GM10248 (cell line): ENCODE measurements at regions of chr10 and their contacts with region 1.

Region 1: DNA sequence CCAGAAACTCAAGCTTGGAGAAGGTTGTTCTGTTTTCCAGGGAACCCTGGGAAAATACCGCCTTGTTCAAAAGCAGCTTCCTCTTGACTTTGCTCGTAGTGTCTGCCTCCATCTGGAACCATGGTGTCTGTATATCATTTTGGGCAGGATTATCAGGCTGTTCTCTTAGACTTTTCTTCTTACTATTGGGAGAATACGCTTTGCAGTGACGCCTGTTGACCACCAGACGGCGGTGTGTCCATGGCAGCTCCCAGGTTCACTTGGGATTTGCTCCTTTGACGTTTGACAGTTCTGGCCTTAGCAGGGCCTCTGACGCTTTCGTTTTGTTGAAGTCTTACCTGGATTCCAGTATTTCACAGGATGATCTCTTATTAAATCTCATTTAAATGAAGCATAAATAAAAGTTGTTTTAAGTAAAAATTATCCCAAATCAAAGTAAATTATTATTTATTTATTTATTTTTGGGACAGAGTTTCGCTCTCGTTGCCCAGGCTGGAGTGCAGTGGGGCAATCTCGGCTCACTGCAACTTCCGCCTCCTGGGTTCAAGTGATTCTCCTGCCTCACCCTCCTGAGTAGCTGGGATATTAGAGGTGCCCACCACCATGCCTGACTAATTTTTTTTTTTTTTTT is 41.8 kb upstream of the GJD4 start:
- DNase-seq: peak; percentile 69
- CTCF ChIP-seq: peak; percentile 93

Region 2: DNA sequence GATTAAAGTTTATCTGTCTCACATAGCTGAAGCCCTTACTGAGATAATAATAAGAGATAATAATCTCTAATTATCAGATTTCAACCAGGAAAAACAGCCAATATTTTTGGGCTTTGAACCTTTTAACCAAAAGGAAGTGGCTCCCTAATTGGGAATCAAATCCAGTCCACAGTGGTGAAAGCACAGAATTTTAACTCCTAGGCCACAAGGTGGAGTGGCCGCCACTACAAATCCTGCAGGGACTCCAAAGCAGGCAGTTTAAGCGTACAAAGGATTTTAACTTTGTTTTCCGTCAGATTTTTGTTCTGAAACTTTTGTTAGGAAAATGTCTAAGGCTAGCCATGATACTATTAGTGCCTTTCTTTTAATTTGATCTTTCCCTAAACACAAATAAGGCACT is 326.6 kb before region 1 on chr10:
- CTCF ChIA-PET with region 1: no interaction called
- POLR2A ChIA-PET with region 1: no interaction called
- DNase-seq: no peak
- CTCF ChIP-seq: peak; percentile 12

Region 3: DNA sequence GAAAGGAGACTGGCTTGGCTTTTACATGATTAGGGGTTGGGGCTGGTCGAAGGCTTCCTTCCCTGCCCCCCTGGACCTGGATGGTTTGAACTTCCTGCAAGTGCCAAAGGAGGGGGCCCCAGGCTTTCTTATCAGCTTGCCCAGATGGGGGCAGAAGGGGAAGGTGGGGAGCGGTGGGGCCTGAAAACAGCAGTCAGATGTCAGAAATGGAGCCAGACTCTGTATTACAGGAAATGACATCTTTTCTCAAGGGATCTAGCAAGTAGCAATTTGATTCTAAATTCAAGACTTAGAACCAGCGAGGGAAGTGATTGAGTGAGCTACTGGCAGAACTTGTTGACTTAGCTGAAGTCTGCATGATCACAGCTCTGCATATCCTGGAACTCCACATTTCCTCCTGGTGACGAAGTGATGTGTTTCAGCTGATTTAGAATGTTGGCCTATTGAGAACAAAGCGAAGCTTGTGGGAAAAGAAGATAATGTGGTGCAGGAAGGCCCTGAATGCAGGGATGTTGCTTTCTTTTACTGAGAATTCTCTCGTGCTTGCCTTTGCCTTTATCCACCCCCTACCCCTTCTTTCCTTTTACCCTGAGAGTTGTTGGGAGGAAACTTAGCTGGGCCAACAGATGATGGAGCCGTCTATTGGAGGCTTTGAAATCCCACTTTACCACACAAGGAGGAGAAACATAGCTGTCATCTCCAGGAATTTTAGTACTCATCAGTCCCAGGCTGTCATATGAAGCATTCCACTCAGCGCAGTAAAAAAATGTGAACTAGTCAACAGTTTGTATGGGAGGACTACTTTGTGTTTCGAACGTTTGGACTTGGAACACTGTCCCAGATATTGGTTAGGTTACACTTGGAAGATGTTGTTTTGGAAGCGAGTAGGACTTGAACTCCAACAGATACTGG is 183.9 kb before region 1 on chr10:
- CTCF ChIA-PET with region 1: interaction called, 11 read pairs
- POLR2A ChIA-PET with region 1: no interaction called
- DNase-seq: peak; percentile 45
- CTCF ChIP-seq: peak; percentile 50

Region 4: GRCh38 chr10:35523670-35524225 is 39.6 kb before region 1 on chr10:
- CTCF ChIA-PET with region 1: interaction called, 14 read pairs
- POLR2A ChIA-PET with region 1: no interaction called
- DNase-seq: peak; percentile 28
- CTCF ChIP-seq: no peak

Region 5: DNA sequence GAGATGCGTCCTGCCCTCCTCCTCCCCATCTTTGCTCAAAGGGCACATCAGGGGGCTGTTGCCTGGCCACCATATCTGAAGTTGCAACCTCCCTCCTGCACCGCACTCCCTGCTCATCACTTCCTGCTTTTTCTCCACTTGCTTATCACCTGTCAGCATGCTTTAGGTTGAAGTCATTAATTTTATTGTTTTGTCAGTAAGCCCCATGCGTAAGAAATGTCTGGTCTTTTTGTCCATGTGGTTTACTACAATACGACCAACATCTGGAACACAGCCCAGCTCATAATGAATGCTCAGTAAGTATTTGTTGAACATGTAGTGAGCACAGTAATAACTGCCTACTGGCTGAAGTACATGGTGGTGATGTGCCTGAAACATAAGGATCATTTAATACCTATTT is 29.8 kb before region 1 on chr10:
- CTCF ChIA-PET with region 1: interaction called, 14 read pairs
- POLR2A ChIA-PET with region 1: no interaction called
- DNase-seq: no peak
- CTCF ChIP-seq: no peak

Region 6: DNA sequence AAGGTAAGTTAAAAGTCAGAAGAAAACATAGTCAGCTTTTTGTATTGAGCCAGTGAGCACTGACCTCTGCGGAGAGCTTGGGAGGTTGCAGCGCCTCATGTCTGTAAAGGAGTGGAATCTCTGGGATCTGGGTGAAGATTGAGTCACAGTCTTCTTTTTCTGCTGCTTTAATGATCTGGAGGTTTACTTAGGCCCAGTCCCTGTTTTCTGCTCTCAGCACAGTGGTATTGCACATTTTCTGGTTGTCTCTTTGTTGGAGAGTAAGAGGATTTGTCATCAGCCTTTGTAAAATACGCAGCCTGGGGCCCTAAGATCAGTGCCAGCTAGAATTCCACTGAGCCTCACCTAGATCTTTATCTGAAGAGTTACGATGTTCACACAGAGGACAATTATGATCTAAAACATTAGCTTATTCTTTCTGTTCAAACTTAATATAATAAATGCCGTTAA is 16.5 kb before region 1 on chr10:
- CTCF ChIA-PET with region 1: interaction called, 59 read pairs
- POLR2A ChIA-PET with region 1: no interaction called
- DNase-seq: no peak
- CTCF ChIP-seq: no peak

Region 7: DNA sequence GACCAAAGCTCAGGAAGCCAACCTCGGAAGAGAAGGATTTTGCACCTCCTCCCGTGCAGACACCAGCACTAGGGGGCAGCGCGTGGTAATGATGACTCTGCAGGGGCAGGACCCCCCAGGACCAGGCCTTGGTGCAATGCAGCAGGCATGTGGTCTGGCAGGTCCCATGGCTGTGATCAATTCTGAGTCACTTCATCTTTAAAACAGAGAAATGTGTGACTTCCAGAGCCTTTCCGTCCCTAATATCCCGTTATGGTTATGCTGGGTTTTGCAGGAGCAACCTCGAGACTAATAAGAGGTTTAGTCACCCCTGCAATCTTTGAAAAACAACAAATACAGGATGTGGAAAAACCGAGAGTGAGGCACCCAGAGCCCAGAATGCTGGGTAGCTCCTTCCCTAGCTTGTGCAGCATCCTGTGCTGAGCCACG is 11.6 kb after region 1 on chr10:
- CTCF ChIA-PET with region 1: interaction called, 93 read pairs
- POLR2A ChIA-PET with region 1: no interaction called
- DNase-seq: no peak
- CTCF ChIP-seq: no peak

Region 8: DNA sequence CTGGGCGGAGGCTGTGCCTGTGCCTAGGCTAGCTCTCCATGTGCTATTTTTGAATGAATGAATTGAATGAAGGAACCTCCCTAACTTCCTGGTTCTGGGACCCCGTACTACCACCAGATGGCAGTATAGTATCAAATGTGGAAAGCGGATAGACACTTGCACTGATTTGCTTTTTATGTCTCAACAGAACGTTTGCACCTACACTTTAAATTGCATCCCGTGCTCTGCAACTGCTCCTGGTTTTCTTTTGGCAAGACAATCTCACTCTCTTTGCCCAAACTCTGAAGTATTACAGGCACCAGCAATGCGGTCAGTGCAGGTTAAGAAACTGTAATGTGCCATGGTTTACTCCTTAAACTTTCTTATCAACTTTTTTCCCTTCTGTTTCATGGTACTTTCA is 72.2 kb after region 1 on chr10:
- CTCF ChIA-PET with region 1: interaction called, 12 read pairs
- POLR2A ChIA-PET with region 1: no interaction called
- DNase-seq: peak; percentile 58
- CTCF ChIP-seq: peak; percentile 85

Region 9: DNA sequence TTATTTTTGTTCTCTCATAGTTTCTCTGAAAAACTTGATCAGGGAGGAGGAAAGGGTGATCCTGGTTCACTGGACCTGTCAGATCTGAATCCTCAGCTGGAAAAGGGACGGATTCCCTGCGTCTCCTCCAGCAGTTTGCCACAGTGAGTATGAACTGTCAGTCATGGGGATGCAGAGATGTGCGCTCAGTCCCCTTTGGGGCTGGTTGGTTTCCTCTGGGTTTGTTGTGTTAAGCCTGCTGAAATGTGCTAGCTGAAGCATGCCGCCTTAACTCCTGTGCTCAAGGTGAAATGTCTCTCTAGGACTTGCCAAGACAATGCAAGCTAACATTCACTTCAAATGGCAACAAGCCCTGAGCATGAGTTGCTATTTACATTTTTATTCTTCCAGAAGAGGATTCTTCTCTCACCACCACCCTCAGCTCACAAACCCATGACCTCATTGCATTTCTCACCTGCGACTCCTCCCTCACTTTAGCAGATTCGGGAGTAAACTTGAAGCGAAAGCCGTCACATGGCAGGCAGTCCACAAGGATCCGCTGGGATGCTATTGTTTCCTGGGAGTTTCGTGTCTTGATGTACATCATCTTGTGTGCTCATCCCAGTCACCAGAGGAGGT is 271.6 kb after region 1 on chr10:
- CTCF ChIA-PET with region 1: no interaction called
- POLR2A ChIA-PET with region 1: no interaction called
- DNase-seq: no peak
- CTCF ChIP-seq: no peak